ENCODE measurements at regions of chr22 and their contacts with region 1.

Region 1: DNA sequence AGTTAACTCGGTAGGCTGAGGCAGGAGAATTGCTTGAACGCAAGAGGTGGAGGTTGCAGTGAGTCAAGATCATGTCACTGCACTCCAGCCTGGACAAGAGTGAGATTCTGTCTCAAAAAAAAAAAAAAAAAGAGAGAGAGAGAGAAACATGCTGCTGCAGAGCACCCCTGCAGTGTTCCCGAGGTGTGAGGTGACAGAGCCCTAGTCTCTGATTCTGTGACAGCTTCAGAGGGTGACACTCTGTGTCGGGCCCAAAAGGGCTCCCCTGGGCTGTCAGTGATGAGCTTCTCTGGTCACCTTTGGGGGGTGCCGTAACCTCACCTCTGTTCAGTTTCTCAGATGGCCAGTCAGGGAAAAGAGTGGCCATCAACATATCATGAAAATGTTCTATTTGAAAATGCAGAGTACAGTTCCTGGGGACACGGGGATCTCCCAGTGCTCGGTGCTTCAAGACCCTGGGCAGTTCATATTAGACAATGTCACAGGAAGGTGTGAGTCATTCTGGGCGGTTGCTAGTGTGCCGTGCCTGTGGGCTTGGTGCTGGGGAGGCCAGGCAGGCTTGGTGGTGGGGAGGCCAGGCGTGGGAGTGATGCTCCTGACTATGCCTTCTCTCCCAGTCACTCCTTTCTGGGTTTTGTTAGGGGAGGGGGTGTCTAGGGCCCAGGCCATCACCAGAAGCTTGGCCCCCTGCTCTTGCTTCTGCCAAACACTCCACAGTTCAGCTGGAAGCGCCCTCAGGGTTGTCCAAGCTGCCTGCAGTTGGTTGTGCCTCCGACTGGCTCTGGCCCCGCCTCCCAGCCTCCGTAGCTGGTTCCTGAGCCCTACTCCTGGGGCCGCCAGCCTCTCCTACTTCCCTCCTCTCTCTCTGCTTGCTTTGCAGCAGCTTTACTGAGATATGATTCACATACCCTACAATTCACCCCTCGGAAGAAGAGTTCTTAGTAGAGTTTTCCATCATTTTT is 52.5 kb upstream of the CLDN5 start:
- DNase-seq: peak; percentile 63
- H3K4me3 Mint-ChIP-seq: peak overlapping the region; percentile 65
- H3K27ac Mint-ChIP-seq: peak overlapping the region; percentile 94
- H3K4me1 Mint-ChIP-seq: peaks cover 44% of the 10 kb centered on the region
- H3K27me3 Mint-ChIP-seq: no peaks in the 10 kb centered on the region

Region 2: DNA sequence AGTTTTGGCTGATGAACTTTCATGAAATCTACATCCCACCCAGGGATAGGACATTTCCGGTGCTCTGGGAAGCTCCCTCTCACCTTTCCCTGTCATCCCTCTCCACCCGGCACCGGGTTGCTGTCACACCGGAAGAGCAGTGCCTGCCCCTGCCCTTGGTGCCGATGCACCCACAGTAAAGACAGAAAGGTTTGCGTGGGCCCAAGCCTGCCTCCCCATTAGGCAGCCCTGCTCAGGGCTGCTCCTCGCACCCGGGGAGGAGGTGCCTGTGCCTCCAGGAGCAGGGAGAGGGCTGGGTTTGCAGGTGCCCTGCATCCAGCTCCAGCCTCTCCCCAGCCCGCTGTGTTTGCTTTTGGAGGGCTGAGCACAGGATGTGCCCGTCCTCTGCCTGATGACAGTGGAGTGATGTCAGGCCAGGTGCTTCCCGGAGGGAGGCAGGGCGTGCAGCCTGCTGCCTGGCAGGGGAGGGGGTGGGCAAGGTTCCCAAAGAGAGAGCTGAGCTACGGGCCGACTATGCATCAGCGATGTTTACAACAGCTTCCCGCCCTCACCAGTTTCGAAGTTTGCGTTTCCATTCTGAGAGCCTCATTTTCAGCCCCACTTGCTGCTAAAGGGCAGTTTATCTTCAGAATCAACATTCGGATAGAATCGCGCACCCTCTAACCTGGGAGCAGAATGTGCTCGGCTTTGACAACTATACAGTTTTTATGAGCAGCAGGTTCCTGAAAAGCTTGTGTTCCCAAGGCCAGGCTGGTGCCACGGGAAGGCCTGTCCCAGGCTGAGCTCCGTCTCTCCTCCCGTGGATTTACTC is 30.7 kb after region 1 on chr22:
- intact Hi-C with region 1: loop called (anchors 1 kb)
- DNase-seq: peak; percentile 18
- H3K4me3 Mint-ChIP-seq: no peak overlapping the region
- H3K27ac Mint-ChIP-seq: peak overlapping the region; percentile 47
- H3K4me1 Mint-ChIP-seq: peaks cover 40% of the 10 kb centered on the region
- H3K27me3 Mint-ChIP-seq: no peaks in the 10 kb centered on the region

Measured in activated T-helper 2 cell treated with anti-CD3 and anti-CD28 coated beads, Interferon-gamma antibody, Interleukin-2, Interleukin-4, amounts not matched to agents 10 μg/mL and 5 μg/mL and 100 μg/mL, durations not matched to agents 14 hours and 24 hours and 36 hours (primary cell).